A549 (cell line): ENCODE measurements at regions of chr3 and their contacts with region 1.

Region 1: GRCh38 chr3:47849699-47850563 is 47.0 kb downstream of the DHX30 start:
- DNase-seq: peak in 1 of 2 experiments; percentile 44
- ATAC-seq: peak; percentile 60 to 73
- H3K4me3 ChIP-seq: no peak overlapping the region
- H3K27ac ChIP-seq: no peak overlapping the region
- H3K4me1 ChIP-seq: no peaks in the 10 kb centered on the region
- CTCF ChIP-seq: peak; percentile 33; the same call in 2 of the 3 replicates
- EP300 ChIP-seq: no peak
- POLR2A ChIP-seq: no peak
- RAD21 ChIP-seq: peak in 1 of 2 experiments; percentile 25; a peak in 1 of 5 replicates

Region 2: GRCh38 chr3:47705391-47705790 is 144.5 kb before region 1 on chr3:
- CTCF ChIA-PET with region 1: no interaction called
- POLR2A ChIA-PET with region 1: no interaction called
- DNase-seq: no peak
- ATAC-seq: no peak
- H3K4me3 ChIP-seq: no peak overlapping the region
- H3K27ac ChIP-seq: no peak overlapping the region
- H3K4me1 ChIP-seq: peaks cover 13% of the 10 kb centered on the region
- CTCF ChIP-seq: no peak
- EP300 ChIP-seq: no peak
- POLR2A ChIP-seq: no peak
- RAD21 ChIP-seq: no peak

Region 3: DNA sequence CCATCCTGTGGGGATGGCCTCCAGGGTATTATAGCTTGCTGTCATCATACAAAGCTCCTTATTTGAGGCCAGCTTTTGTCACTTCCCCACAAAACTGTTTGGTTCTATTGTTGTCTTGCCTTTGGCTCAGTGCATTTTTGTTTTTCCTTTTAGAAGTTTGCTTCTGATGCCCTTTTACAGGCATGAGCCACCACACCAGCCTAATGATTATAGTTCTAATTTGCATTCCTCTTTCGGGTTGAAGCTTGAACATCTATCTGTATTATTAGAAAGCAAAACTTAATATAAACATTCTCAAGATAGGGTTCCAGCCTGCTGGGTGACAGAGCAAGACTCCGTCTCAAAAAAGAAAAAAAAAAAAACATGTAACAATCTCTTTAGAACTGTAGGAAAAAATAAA is 108.0 kb before region 1 on chr3:
- CTCF ChIA-PET with region 1: no interaction called
- POLR2A ChIA-PET with region 1: no interaction called
- DNase-seq: no peak
- ATAC-seq: no peak
- H3K4me3 ChIP-seq: no peak overlapping the region
- H3K27ac ChIP-seq: no peak overlapping the region
- H3K4me1 ChIP-seq: no peaks in the 10 kb centered on the region
- CTCF ChIP-seq: no peak
- EP300 ChIP-seq: no peak
- POLR2A ChIP-seq: no peak
- RAD21 ChIP-seq: no peak

Region 4: DNA sequence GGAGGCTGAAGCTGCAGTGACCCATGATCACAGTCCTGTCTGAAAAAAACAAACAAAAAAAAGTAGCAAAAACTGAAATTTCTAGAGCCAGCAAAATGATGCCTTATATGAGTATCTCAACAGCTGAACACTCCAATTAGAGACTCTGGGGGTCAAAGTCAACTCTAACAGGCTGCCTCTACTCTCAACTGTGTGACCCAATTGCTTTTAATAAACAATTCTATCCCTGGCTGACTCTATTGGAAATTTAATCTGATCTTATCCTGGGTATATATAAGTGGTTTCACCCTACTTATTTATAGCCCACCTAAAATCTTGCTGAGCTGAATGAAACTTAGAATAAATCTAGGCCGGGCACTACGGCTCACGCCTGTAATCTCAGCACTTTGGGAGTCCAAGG is 97.2 kb before region 1 on chr3:
- CTCF ChIA-PET with region 1: no interaction called
- POLR2A ChIA-PET with region 1: no interaction called
- DNase-seq: no peak
- ATAC-seq: no peak
- H3K4me3 ChIP-seq: no peak overlapping the region
- H3K27ac ChIP-seq: no peak overlapping the region
- H3K4me1 ChIP-seq: no peaks in the 10 kb centered on the region
- CTCF ChIP-seq: no peak
- EP300 ChIP-seq: no peak
- POLR2A ChIP-seq: no peak
- RAD21 ChIP-seq: no peak

Region 5: DNA sequence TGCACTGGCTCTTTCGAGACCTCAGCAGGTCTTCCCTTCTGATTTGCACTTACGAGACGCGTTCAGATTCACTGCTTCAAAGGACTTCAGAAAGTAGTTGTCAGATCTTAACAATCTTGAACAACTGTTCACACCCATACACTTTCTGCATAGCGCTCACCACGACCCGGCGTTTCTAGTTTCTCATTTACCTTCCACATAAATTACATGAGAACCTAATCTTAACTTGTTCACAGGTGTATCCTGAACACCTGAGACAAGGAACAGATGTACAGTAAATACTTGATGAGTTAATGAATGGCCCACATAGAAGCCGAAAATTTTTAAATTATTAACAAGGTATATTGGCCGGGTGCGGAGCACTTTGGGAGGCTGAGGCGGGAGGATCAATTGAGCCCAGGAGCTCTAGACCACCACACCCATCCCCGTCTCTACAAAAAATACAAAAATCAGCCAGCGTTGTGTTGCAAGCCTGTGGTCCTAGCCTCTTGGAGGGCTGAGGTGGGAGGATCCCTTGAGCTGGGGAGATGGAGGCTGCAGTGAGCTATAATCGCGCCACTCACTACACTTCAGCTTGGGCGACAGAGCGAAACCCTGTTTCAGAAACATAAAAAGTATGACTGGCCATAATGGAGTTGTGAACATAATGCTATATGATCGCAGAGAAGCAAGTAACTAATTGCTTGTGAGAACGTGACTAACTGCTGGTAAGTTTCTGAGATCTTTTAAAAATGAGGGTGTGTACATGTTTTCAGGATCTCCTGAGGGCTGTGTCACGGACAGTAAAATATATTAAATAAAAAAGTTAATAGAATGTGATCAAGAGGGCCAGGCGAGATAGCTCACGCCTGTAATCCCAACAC is 67.3 kb before region 1 on chr3:
- CTCF ChIA-PET with region 1: no interaction called
- POLR2A ChIA-PET with region 1: no interaction called
- DNase-seq: no peak
- ATAC-seq: no peak
- H3K4me3 ChIP-seq: peak overlapping the region; percentile 90
- H3K27ac ChIP-seq: peak overlapping the region; percentile 97 to 99
- H3K4me1 ChIP-seq: peaks cover 20% of the 10 kb centered on the region; the same call in 2 of the 3 replicates
- CTCF ChIP-seq: no peak
- EP300 ChIP-seq: no peak
- POLR2A ChIP-seq: no peak
- RAD21 ChIP-seq: no peak

Region 6: GRCh38 chr3:47836986-47837385 is 12.9 kb before region 1 on chr3:
- CTCF ChIA-PET with region 1: interaction called, 17 read pairs
- POLR2A ChIA-PET with region 1: no interaction called
- DNase-seq: no peak
- ATAC-seq: peak in 1 of 2 experiments; percentile 26; a peak in 3 of 6 replicates
- H3K4me3 ChIP-seq: no peak overlapping the region
- H3K27ac ChIP-seq: no peak overlapping the region
- H3K4me1 ChIP-seq: no peaks in the 10 kb centered on the region
- CTCF ChIP-seq: no peak
- EP300 ChIP-seq: no peak
- POLR2A ChIP-seq: no peak
- RAD21 ChIP-seq: no peak